A549 (cell line): ENCODE measurements at regions of chr2 and their contacts with region 1.

Region 1: GRCh38 chr2:69946351-69947077 is 14.9 kb downstream of the ASPRV1 start:
- DNase-seq: peak; percentile 60 to 69
- ATAC-seq: peak; percentile 82 to 84
- H3K4me3 ChIP-seq: no peak overlapping the region
- H3K27ac ChIP-seq: peak overlapping the region; percentile 49 to 69; a peak in 5 of 6 replicates
- H3K4me1 ChIP-seq: peaks cover 19% of the 10 kb centered on the region
- CTCF ChIP-seq: no peak
- EP300 ChIP-seq: no peak
- POLR2A ChIP-seq: no peak
- RAD21 ChIP-seq: no peak

Region 2: GRCh38 chr2:69933839-69934613 is 12.5 kb before region 1 on chr2:
- CTCF ChIA-PET with region 1: interaction called, 22 read pairs
- POLR2A ChIA-PET with region 1: no interaction called
- DNase-seq: peak; percentile 60 to 70
- ATAC-seq: peak; percentile 89 to 90
- H3K4me3 ChIP-seq: no peak overlapping the region
- H3K27ac ChIP-seq: peak overlapping the region; percentile 72 to 81
- H3K4me1 ChIP-seq: peaks cover 23% of the 10 kb centered on the region; the same call in 2 of the 3 replicates
- CTCF ChIP-seq: no peak
- EP300 ChIP-seq: no peak
- POLR2A ChIP-seq: no peak
- RAD21 ChIP-seq: no peak

Region 3: DNA sequence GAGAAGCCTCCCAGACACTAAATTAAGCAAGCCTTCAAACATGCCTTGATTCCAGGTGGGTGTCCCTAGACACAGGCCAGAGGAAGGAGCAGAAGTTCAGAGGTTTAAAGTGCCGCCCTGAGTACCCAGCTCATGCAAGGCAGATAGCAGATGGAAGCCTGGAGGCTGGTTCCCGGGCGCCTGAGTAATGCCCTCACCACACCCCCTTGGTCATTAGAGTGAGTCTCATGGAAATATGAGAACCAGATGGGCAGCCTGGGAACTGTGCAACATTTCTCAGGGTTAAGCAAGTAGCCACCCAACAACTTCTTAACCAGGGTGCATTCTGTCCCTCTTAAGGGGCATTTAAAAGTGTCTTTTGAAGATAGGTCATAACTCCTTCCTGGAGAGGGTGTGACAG is 563.0 kb after region 1 on chr2:
- CTCF ChIA-PET with region 1: no interaction called
- POLR2A ChIA-PET with region 1: no interaction called
- DNase-seq: no peak
- ATAC-seq: no peak
- H3K4me3 ChIP-seq: no peak overlapping the region
- H3K27ac ChIP-seq: no peak overlapping the region
- H3K4me1 ChIP-seq: no peaks in the 10 kb centered on the region
- CTCF ChIP-seq: no peak
- EP300 ChIP-seq: no peak
- POLR2A ChIP-seq: no peak
- RAD21 ChIP-seq: no peak